Dendritic cell treated with granulocyte-macrophage colony-stimulating factor and Interleukin-4, amounts not matched to agents 40 ng/mL and 50 ng/mL, for 4 days (primary cell): ENCODE measurements at regions of chr15 and their contacts with region 1.

Region 1: GRCh38 chr15:63048115-63048775 is 5.7 kb downstream of the TPM1 start:
- H3K4me3 Mint-ChIP-seq: peak overlapping the region; percentile 91
- H3K27ac Mint-ChIP-seq: peak overlapping the region; percentile 85
- H3K4me1 Mint-ChIP-seq: peaks cover 50% of the 10 kb centered on the region
- H3K27me3 Mint-ChIP-seq: peaks cover 57% of the 10 kb centered on the region

Region 2: GRCh38 chr15:62277816-62278394 is 770.3 kb before region 1 on chr15:
- intact Hi-C with region 1: no loop called
- H3K4me3 Mint-ChIP-seq: no peak overlapping the region
- H3K27ac Mint-ChIP-seq: no peak overlapping the region
- H3K4me1 Mint-ChIP-seq: no peaks in the 10 kb centered on the region
- H3K27me3 Mint-ChIP-seq: peaks cover 2% of the 10 kb centered on the region

Region 3: DNA sequence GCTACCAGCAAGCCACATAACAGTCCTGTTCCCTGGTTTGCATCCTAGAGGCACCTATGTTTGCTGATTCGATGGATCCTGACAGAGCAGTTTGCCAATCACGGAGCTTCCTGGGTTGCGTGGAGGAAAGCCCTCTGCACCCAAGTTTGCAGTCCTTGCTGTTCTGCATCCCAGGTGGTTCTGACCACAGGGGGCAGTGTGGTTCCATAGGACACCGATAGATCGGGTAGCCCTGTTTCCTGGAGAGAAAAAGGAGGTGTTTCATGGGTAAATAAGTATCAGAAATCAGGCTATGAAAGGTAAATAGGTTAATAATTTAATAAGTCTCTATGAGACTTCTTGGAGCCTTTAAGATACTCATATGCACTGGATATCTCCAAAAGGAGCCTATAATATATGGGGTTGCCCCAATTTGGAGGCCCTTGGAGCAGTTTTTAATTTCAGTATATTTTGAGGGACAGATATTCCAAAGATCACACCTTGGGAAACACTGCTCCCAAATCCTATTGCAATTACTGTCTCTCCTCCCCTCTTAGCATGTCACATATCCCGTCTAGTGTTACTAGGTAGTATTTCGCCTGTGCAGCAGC is 200.2 kb before region 1 on chr15:
- intact Hi-C with region 1: loop called (anchors 5 kb)
- H3K4me3 Mint-ChIP-seq: no peak overlapping the region
- H3K27ac Mint-ChIP-seq: no peak overlapping the region
- H3K4me1 Mint-ChIP-seq: peaks cover 14% of the 10 kb centered on the region
- H3K27me3 Mint-ChIP-seq: peaks cover 9% of the 10 kb centered on the region

Region 4: GRCh38 chr15:62958528-62959363 is 89.5 kb before region 1 on chr15:
- intact Hi-C with region 1: no loop called
- H3K4me3 Mint-ChIP-seq: no peak overlapping the region
- H3K27ac Mint-ChIP-seq: no peak overlapping the region
- H3K4me1 Mint-ChIP-seq: peaks cover 13% of the 10 kb centered on the region
- H3K27me3 Mint-ChIP-seq: peaks cover 14% of the 10 kb centered on the region